ENCODE measurements at regions of chr21 and their contacts with region 1.

Region 1: DNA sequence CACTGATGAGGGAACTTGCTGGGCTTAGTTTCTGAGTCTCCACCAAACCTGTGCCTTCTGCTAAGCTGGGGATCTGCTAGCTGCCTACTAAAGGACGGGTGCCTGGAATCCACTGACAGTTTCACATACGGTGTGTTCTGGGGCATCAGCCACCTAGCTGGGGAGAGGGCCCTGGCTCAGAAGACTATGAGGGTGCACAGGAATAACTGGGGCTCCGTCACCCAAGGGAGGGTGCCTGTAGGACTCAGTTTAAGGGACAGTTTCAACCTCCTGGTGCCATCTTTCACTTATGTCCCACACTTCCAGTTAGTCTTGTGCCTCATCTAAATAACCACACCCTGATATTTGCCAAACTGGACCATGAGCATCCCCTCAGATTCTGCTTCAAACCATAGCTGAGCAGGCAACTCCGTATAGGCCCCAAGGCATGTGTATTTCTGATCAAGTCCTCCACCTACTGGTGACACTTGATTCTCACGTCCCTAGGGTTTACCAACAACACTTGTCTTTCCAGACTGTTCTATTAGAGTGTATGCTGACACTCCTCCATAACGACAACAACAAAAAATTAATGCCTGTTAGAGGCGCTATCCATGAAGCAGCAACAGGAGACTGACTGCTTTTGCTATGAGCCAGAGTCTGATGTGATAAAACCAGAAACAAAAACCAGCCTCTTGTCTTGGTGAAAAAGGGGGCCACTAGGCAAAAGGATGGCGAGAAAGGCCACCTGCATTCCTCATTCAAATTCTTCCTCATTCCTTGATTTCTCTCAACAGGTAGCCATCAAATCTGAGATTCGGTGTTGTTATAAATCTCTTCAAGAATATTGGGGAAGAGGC is 55.0 kb upstream of the PAXBP1 start:
- DNase-seq: peak; percentile 56
- ATAC-seq: peak; percentile 94
- H3K4me3 Mint-ChIP-seq: no peak overlapping the region
- H3K27ac Mint-ChIP-seq: no peak overlapping the region
- H3K4me1 Mint-ChIP-seq: no peaks in the 10 kb centered on the region
- H3K27me3 Mint-ChIP-seq: no peaks in the 10 kb centered on the region

Region 2: DNA sequence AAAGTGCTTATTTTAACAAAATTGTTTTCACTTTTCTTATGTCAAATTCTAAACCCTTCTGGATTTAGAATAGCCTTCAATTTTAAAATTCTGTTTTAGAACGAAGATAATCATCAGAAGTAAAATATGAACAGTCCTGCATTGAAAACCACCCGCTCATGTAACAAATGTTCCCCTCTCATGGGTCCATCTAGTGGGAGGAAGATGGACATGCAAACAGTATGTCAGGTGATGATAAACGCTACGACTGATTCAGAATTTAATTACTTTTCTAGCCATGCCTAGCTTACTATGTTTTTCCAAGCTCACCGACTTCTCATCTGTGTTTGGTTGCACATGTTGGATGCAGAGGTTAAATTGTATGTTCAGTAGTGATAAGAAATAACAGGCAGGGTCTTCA is 1143.5 kb before region 1 on chr21:
- CTCF ChIA-PET with region 1: no interaction called
- POLR2A ChIA-PET with region 1: no interaction called
- intact Hi-C with region 1: no loop called
- DNase-seq: no peak
- ATAC-seq: no peak
- H3K4me3 Mint-ChIP-seq: no peak overlapping the region
- H3K27ac Mint-ChIP-seq: peak overlapping the region; percentile 29
- H3K4me1 Mint-ChIP-seq: no peaks in the 10 kb centered on the region
- H3K27me3 Mint-ChIP-seq: no peaks in the 10 kb centered on the region

Region 3: DNA sequence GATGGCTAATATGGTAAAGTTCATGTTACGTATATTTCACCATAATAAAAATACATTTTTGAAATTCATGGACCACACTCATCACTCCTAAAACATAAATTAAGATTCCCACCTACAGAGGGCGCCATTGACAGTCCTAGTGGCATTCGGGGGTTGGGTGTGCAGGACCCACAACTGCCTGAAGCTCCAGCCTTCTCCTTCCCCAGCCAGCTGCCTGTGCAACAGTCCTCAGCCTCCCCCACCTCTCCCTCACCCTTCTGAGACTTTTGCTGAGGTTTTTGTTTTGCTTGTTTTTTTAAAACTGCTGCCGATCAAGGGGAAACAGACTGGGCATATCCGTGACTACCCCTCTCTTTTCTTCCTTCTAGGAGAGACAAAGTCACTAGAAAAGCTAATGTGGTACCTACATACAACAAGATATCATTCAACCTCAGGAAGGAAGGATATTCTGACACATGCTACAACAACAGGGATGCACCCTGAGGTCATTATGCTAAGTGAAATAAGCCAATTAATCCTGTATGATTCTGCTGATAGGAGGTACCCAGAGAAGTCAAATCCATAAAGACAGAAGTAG is 423.3 kb before region 1 on chr21:
- CTCF ChIA-PET with region 1: no interaction called
- POLR2A ChIA-PET with region 1: no interaction called
- intact Hi-C with region 1: loop called in 1 of 2 experiments (anchors 2 kb)
- DNase-seq: peak; percentile 77
- ATAC-seq: peak; percentile 92
- H3K4me3 Mint-ChIP-seq: no peak overlapping the region
- H3K27ac Mint-ChIP-seq: no peak overlapping the region
- H3K4me1 Mint-ChIP-seq: peaks cover 7% of the 10 kb centered on the region
- H3K27me3 Mint-ChIP-seq: no peaks in the 10 kb centered on the region

Region 4: DNA sequence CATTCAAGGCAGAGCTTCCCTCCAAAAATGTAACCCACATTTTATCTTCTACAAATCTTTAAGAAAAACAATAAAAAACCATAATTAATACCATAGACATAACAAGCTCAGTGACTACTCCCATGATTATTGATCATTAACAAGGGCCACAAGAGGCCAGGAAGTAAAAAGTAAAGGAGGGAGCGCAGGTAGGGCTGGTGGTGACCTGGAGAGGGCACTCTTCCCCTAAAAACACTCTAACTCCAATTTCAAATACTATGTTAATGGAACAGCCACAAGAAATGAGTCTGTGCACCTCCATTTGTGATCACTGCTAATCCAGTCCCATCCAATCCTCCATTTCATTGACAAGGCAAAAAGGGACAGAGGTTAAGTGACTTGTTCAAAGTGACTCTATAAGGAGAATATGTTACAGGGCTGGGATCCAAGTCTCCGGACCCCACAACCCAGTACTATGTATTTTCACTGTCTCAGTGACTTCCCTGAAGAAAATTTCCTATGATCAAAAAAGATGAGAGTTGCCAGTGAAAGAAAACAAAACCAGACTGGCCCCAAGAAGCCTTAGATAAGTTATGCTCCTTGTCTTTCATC is 173.1 kb before region 1 on chr21:
- CTCF ChIA-PET with region 1: interaction called, 16 read pairs
- POLR2A ChIA-PET with region 1: no interaction called
- intact Hi-C with region 1: loop called (anchors 1 kb)
- DNase-seq: peak; percentile 51
- ATAC-seq: peak; percentile 69
- H3K4me3 Mint-ChIP-seq: no peak overlapping the region
- H3K27ac Mint-ChIP-seq: no peak overlapping the region
- H3K4me1 Mint-ChIP-seq: peaks cover 3% of the 10 kb centered on the region
- H3K27me3 Mint-ChIP-seq: no peaks in the 10 kb centered on the region

Region 5: GRCh38 chr21:32674731-32675130 is 151.8 kb before region 1 on chr21:
- CTCF ChIA-PET with region 1: no interaction called
- POLR2A ChIA-PET with region 1: no interaction called
- intact Hi-C with region 1: no loop called
- DNase-seq: no peak
- ATAC-seq: no peak
- H3K4me3 Mint-ChIP-seq: no peak overlapping the region
- H3K27ac Mint-ChIP-seq: peak overlapping the region; percentile 45
- H3K4me1 Mint-ChIP-seq: no peaks in the 10 kb centered on the region
- H3K27me3 Mint-ChIP-seq: no peaks in the 10 kb centered on the region

Region 6: GRCh38 chr21:32687643-32688345 is 138.8 kb before region 1 on chr21:
- CTCF ChIA-PET with region 1: interaction called, 8 read pairs
- POLR2A ChIA-PET with region 1: no interaction called
- intact Hi-C with region 1: loop called in 1 of 2 experiments (anchors 1 kb)
- DNase-seq: no peak
- ATAC-seq: no peak
- H3K4me3 Mint-ChIP-seq: no peak overlapping the region
- H3K27ac Mint-ChIP-seq: no peak overlapping the region
- H3K4me1 Mint-ChIP-seq: peaks cover 2% of the 10 kb centered on the region
- H3K27me3 Mint-ChIP-seq: no peaks in the 10 kb centered on the region

Region 7: DNA sequence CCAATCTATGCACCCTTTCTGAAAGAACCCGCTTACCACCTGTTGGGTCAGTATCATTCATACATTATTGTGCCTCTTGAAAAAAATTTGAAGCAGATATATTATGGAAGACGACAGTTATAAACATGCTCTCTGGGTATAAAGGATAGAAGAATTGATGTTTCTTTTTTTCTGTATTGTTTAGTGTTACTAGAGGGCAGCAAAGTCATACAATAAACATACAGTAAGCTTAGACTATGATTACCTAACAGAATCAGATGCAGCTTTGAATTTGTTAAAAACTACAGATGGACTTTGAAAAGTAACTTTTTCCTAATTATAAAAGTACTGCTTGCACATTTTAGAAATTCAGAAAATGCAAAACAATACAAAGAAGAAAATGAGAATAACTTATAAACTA is 43.9 kb before region 1 on chr21:
- CTCF ChIA-PET with region 1: interaction called, 4 read pairs
- POLR2A ChIA-PET with region 1: no interaction called
- intact Hi-C with region 1: loop called (anchors 5 kb)
- DNase-seq: no peak
- ATAC-seq: no peak
- H3K4me3 Mint-ChIP-seq: no peak overlapping the region
- H3K27ac Mint-ChIP-seq: no peak overlapping the region
- H3K4me1 Mint-ChIP-seq: peaks cover 6% of the 10 kb centered on the region
- H3K27me3 Mint-ChIP-seq: no peaks in the 10 kb centered on the region

Region 8: GRCh38 chr21:32940079-32941014 is 113.8 kb after region 1 on chr21:
- CTCF ChIA-PET with region 1: interaction called, 10 read pairs
- POLR2A ChIA-PET with region 1: no interaction called
- intact Hi-C with region 1: no loop called
- DNase-seq: peak; percentile 56
- ATAC-seq: peak; percentile 74
- H3K4me3 Mint-ChIP-seq: no peak overlapping the region
- H3K27ac Mint-ChIP-seq: no peak overlapping the region
- H3K4me1 Mint-ChIP-seq: peaks cover 4% of the 10 kb centered on the region
- H3K27me3 Mint-ChIP-seq: no peaks in the 10 kb centered on the region